Activated T-helper 2 cell treated with anti-CD3 and anti-CD28 coated beads, Interferon-gamma antibody, Interleukin-2, Interleukin-4, amounts not matched to agents 10 μg/mL and 5 μg/mL and 100 μg/mL, durations not matched to agents 14 hours and 24 hours and 36 hours (primary cell): ENCODE measurements at regions of chr2 and their contacts with region 1.

Region 1: GRCh38 chr2:112254466-112255239 is at the start of gene ZC3H8:
- DNase-seq: peak; percentile 95
- H3K4me3 Mint-ChIP-seq: peak within 1 kb of the TSS; percentile 31
- H3K27ac Mint-ChIP-seq: peak within 1 kb of the TSS; percentile 91
- H3K4me1 Mint-ChIP-seq: peaks cover 24% of the 10 kb centered on the region
- H3K27me3 Mint-ChIP-seq: no peaks in the 10 kb centered on the region
- total RNA-seq, gene ZC3H8: 31.8 and 33.4 TPM in 2 replicates

Region 2: DNA sequence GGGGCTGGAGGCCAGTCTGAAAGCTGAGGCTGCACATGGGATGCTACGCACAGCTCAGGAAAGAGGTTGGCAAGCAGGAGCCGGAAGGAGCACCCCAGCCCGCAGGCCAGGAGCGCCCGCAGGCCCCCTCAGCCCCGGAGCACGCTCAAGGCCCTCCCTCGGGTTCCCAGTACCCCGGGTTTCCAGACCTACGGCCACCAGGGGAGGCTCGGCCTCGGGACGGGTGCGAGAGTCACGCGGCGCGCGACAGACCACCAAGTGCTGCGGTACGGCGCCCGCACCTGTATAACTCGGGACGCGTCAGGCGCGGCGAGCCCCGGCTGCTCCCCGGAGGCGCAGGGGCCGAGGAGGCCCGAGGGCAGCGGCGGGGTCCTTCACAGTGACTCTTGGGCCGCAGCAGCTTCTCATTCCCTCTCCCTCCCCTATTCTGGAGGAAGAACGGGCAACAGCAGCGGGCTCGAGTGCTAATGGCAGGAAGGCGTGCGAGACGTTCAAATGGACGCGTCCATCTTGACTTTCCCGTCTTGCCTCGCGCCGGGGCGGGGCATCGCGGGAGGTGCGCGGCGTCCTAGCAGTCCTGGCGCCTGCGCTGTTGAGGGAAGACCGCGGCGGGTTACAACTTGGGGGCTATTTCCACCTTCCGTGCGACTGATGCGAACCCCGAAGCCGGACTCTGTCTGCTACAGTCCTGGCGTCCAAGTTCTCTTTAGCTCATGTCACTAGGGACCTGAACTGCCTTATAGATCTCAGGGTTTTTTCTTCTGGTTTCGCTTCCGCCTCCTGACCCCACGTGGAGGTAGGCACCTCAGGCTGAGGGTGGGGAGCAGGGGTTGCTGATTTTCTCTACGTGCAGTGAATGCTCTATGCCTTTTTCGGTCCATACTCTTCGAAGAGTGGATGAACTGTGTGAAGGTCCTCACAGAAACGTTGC is 370.7 kb before region 1 on chr2 and contains the start of gene ANAPC1:
- intact Hi-C with region 1: loop called (anchors 10 kb)
- DNase-seq: peak; percentile 84
- H3K4me3 Mint-ChIP-seq: peak within 1 kb of the TSS; percentile 93
- H3K27ac Mint-ChIP-seq: peak within 1 kb of the TSS; percentile 90
- H3K4me1 Mint-ChIP-seq: peaks cover 7% of the 10 kb centered on the region
- H3K27me3 Mint-ChIP-seq: no peaks in the 10 kb centered on the region
- total RNA-seq, gene ANAPC1: 115 and 121 TPM in 2 replicates

Region 3: DNA sequence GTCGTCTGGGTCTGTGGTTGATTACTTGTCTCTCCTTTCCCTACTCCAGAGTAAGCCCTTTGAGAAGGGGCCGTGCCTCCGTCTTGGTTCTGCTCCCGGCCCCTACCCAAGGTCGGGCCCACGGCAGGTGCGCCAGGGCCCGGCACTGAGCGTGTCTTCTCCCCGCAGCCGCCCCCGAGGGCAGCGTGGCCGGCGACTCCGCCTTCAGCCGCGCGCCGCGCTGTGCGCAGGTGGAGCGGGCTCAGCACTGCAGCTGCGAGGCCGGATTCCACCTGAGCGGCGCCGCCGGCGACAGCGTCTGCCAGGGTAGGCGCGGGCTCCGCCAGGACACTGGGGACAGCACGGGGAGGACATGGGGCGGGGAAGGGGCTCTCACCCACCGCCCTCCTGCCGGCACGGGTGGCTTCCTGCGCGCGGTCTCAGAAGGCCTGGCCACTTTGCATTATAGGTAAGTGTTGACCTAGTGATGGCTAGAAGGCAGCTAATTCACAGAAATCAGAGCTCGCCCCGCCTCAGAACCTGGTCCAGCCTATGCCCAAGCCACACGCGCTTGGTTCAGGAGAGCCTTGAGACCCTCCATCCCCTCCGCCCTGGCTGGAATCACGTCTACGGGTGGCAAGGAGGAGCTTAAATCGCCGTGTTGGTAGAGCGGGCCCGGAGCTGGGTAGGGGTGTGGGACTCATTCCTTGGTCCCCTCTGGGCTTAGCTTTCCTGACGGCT is 72.9 kb before region 1 on chr2:
- intact Hi-C with region 1: loop called (anchors 2 kb)
- DNase-seq: peak; percentile 43
- H3K4me3 Mint-ChIP-seq: peak overlapping the region; percentile 80
- H3K27ac Mint-ChIP-seq: peak overlapping the region; percentile 93
- H3K4me1 Mint-ChIP-seq: peaks cover 38% of the 10 kb centered on the region
- H3K27me3 Mint-ChIP-seq: no peaks in the 10 kb centered on the region

Region 4: GRCh38 chr2:112275306-112275886 is 20.7 kb after region 1 on chr2 and contains the start of gene ZC3H6:
- intact Hi-C with region 1: loop called (anchors 1 kb)
- DNase-seq: peak; percentile 100
- H3K4me3 Mint-ChIP-seq: peak within 1 kb of the TSS; percentile 93
- H3K27ac Mint-ChIP-seq: peak within 1 kb of the TSS; percentile 98
- H3K4me1 Mint-ChIP-seq: peaks cover 10% of the 10 kb centered on the region
- H3K27me3 Mint-ChIP-seq: no peaks in the 10 kb centered on the region
- total RNA-seq, gene ZC3H6: 8.0 and 8.2 TPM in 2 replicates

Region 5: DNA sequence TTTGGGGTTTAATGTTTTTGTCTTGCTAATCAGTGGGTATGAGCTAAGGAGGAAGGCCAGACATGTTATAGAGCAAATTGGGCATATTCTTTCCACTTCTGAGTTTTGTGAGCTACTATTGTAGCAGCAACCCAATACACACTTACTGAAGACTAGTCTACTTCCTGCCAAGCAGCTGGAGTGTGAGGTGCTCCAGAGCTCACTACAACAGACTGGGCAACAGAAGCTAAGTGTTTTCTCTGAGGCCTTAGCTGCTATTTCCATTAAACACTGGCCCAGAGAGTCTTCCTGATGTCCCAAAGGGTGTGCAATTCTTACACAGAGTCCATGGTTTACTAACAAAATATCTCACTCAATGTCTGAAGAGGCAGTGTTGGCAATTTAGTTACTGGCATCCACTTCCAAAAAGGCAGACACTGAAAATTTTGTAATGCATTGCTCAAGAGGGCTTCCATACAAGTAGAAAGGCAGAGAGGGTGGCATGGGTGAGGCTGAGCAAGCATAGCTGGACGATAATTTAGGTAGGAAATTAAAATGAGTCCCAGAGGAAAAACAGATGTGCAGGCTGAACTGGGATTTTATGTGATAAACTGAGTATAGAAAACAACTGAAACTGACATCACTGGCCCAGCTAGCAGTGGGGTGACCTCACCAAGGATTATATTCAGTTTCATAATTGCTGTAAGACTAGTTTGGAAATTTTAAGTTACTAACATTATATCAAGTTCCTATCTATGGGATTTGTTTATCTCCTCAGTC is 89.4 kb after region 1 on chr2:
- intact Hi-C with region 1: no loop called
- DNase-seq: no peak
- H3K4me3 Mint-ChIP-seq: no peak overlapping the region
- H3K27ac Mint-ChIP-seq: peak overlapping the region; percentile 29
- H3K4me1 Mint-ChIP-seq: peaks cover 14% of the 10 kb centered on the region
- H3K27me3 Mint-ChIP-seq: peaks cover 5% of the 10 kb centered on the region

Region 6: DNA sequence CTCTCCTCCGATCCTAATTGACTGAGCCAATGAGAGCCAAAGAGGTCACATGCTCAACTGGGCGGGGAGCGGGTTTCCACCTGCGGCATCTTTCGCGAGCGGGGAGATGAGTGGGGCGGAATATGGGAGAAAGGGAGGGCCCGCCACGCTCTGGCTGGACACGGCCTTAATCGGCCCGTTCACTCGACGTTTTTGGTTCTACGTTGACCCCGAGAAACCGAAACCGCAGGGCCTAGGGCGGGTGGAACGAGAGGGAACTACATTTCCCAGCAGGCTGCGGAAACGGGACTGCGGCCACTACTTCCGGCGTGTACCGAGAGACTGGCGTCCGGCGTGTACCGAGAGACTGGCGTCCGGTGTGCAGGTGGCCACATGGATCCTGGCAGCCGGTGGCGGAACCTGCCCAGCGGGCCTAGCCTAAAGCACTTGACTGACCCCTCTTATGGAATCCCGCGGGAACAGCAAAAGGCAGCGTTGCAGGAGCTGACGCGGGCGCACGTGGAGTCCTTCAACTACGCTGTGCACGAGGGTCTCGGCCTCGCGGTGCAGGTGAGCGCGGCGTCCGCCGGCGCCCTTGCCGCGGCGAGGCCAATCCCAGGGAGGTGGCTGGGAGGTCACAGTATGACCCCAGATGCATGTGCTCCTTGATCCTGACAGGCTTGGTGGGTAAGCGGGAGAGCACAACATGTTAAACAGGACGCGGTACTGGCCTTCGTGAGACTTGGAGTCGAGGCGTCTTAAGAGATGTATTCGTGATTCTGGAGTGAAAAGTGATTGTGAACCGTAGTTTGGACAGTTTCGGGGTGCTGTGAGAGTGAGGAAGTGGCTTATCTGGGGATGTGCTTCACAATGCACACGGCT is 287.7 kb after region 1 on chr2 and contains the start of gene POLR1B:
- intact Hi-C with region 1: loop called (anchors 5 kb)
- DNase-seq: peak; percentile 78
- H3K4me3 Mint-ChIP-seq: no peak within 1 kb of the TSS
- H3K27ac Mint-ChIP-seq: no peak within 1 kb of the TSS
- H3K4me1 Mint-ChIP-seq: peaks cover 12% of the 10 kb centered on the region
- H3K27me3 Mint-ChIP-seq: no peaks in the 10 kb centered on the region
- total RNA-seq, gene POLR1B: 58.0 and 68.2 TPM in 2 replicates